Thyroid gland (tissue), 4 donors: ENCODE measurements at regions of chr9 and their contacts with region 1.

Region 1: GRCh38 chr9:133184962-133185361 is 21.2 kb upstream of the GBGT1 start:
- DNase-seq: peak; percentile 63 to 65
- H3K4me3 ChIP-seq: no peak overlapping the region
- H3K27ac ChIP-seq: no peak overlapping the region
- H3K4me1 ChIP-seq: peaks cover 3 to 17% of the 10 kb centered on the region in 2 donors
- H3K27me3 ChIP-seq: no peaks in the 10 kb centered on the region
- CTCF ChIP-seq: peak in 5 of 6 experiments; percentile 42 to 85 (median 69)
- POLR2A ChIP-seq: no peak

Region 2: GRCh38 chr9:133089271-133089671 is 95.7 kb before region 1 on chr9:
- intact Hi-C with region 1: no loop called
- DNase-seq: no peak
- H3K4me3 ChIP-seq: no peak overlapping the region
- H3K27ac ChIP-seq: no peak overlapping the region
- H3K4me1 ChIP-seq: no peaks in the 10 kb centered on the region
- H3K27me3 ChIP-seq: no peaks in the 10 kb centered on the region
- CTCF ChIP-seq: no peak
- POLR2A ChIP-seq: no peak

Region 3: DNA sequence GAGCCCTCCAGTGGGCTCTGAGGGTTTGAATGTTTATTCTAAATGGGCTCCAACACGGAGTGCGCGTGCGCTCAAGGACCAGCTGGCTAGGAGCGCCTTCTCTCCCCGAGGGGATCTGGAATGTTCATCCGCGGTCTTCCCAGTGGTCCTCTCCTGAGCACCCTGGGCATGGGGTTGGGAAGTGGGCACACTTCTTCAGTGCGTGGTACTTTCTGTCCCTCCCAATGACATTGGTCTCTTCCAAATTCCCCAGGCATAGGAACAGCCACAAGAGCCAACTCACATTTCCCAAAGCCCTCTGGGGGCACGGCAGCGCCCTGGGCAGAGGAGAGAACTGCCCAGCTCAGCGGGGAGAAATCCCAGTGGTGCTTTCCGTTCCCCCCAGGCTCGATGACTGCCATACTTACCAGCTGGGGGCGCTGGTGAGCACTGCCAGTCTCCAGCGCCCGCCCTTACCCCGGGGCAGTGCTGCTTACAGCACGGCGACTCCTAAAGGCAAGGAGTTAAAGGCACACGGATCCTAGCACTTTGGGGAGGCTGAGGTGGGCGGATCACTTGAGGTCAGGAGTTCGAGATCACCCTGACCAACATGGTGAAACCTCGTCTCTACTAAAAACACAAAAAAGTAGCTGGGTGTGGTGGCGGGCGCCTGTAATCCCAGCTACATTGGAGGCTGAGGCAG is 54.0 kb after region 1 on chr9:
- intact Hi-C with region 1: no loop called
- DNase-seq: peak; percentile 84 to 88
- H3K4me3 ChIP-seq: no peak overlapping the region
- H3K27ac ChIP-seq: peak overlapping the region; percentile 79 to 89 (median 89)
- H3K4me1 ChIP-seq: peaks cover 24 to 50% of the 10 kb centered on the region in 2 donors
- H3K27me3 ChIP-seq: no peaks in the 10 kb centered on the region
- CTCF ChIP-seq: peak; percentile 41 to 87 (median 81)
- POLR2A ChIP-seq: peak in 1 of 2 donors; percentile 30

Region 4: DNA sequence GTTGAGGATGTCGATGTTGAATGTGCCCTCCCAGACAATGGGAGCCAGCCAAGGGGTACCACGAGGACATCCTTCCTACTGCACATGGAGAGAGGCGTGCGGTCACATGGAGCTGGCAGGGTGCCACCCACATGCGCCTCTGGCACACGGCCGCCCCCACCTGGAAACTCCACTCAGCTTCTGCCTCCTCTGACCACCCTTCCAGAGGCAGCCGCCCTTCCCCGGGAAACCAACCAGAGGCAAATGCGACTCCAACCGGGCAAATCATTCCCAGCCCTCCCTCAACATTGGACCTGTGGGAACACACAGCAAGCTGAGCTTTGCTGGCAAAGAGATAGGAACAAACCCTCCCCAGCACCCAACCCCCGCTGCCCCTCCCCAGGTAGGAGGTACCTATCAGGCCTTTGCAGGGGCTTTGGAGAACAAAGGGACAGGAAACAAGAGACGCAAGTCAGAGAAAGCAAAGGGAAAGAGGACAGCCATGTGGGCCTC is 72.5 kb after region 1 on chr9:
- intact Hi-C with region 1: loop called (anchors 5 kb)
- DNase-seq: peak; percentile 77 to 80
- H3K4me3 ChIP-seq: no peak overlapping the region
- H3K27ac ChIP-seq: peak overlapping the region; percentile 77 to 85 (median 78)
- H3K4me1 ChIP-seq: peaks cover 43 to 58% of the 10 kb centered on the region in 2 donors
- H3K27me3 ChIP-seq: no peaks in the 10 kb centered on the region
- CTCF ChIP-seq: no peak
- POLR2A ChIP-seq: no peak

Region 5: DNA sequence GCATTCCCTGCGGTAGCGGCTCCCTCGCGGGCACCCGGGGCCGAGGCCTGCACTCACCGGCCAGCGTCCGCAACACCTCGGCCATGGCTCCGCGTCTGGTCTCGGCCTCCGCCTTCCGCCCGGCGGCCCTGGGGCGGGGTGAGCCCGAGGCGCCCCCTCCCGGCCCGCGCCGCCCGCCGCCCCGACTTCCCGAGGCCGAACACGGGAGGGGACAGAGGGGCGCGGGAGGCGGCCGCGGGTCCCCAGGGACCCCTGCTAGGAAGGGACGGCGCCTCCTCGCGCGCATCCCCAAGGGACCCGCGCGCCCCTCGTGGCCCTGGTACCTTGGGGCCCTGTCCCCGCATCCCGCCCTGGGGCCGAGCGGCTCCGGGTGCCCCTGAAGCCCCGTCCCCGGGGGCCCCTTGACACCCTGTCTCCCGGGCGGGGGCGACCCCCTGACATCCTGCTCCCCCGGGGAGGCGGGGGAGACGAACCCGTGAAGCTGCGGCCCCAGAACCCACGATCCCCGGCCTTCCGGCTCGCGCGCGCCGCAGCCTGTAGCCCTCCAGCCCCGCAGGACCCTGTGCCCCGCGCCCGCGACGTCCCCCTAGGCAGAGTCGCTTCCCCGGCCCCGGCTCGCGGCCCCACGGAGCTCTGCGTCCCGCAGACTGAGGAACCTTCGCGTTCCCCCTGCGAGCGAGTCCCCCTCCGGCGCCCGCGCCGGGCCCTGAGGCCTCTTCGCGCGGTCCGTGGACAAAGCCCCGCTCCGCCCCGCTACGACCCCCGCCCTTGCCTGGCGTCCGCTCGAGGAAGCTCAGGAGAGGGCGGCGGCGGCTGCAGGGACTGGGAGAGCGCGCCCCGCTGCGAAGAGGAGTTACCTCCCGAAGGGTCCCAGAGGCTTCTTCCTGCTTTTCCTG is 90.4 kb after region 1 on chr9 and contains the start of gene ABO:
- intact Hi-C with region 1: loop called (anchors 5 kb)
- DNase-seq: peak; percentile 61 to 67
- H3K4me3 ChIP-seq: peak within 1 kb of the TSS; percentile 41 to 79 (median 68)
- H3K27ac ChIP-seq: peak within 1 kb of the TSS; percentile 81 to 96 (median 94)
- H3K4me1 ChIP-seq: peaks cover 11 to 16% of the 10 kb centered on the region in 2 donors
- H3K27me3 ChIP-seq: no peaks in the 10 kb centered on the region
- CTCF ChIP-seq: peak in 3 of 6 experiments; percentile 56 to 67 (median 61)
- POLR2A ChIP-seq: peak in 1 of 2 donors; percentile 58
- total RNA-seq, gene ABO: 15.7 to 32.6 (median 24.9) TPM

Region 6: GRCh38 chr9:133335878-133336811 is 151.2 kb after region 1 on chr9 and contains the start of gene SURF6:
- intact Hi-C with region 1: loop called (anchors 5 kb)
- DNase-seq: peak; percentile 88 to 92
- H3K4me3 ChIP-seq: peak within 1 kb of the TSS; percentile 81 to 91 (median 90)
- H3K27ac ChIP-seq: peak within 1 kb of the TSS in 2 of 3 donors; percentile 50 to 71
- H3K4me1 ChIP-seq: peaks cover 16 to 21% of the 10 kb centered on the region in 2 donors
- H3K27me3 ChIP-seq: no peaks in the 10 kb centered on the region
- CTCF ChIP-seq: peak in 1 of 6 experiments; percentile 31
- POLR2A ChIP-seq: peak in 1 of 2 donors; percentile 71
- total RNA-seq, gene SURF6: 18.4 to 34.9 (median 22.0) TPM

Region 7: DNA sequence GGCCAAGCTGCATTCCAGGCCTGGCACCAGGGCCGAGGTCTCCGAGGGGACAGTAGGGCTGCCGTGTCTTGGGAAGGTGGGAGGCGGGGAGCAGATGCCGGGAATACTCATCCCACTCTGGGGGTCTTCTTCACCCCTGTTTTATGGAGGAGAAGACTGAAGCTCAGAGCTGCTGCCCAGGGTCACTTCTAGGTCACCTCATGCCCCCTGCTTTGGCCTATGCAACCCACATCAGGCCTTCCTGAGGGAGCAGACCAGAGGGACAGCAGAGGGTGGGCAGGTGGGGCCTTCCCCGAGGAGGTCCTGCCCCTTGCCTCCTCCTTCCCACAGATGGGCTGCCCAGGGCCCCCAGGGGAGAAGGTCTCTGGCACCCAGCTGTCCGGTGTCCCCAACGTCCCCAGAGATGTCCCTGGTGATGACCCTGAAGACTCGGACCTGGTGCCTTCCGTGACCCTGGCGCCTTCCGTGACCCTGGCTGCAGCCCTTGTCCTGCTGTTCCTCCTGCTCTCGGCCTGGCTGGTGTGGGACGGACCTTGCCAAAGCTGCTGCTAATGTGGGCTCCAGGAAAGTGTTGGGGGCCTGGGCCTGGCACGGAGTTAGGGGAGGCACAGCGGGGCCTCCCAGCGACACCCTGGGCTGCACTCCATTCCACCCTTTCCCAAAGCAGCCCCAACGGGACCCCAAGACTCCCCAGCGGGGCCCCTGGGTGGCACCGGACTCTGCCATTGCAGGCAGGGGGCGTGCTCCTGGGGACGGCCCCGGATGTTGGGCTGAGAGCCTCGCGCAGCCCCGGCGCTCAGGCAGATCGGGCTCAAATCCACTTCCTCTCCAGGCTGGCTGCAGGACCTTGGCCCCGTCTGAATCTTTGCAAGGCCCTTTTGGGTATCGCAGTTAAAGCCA is 300.6 kb after region 1 on chr9:
- intact Hi-C with region 1: loop called (anchors 5 kb)
- DNase-seq: no peak
- H3K4me3 ChIP-seq: no peak overlapping the region
- H3K27ac ChIP-seq: no peak overlapping the region
- H3K4me1 ChIP-seq: peaks cover 0 to 9% of the 10 kb centered on the region in 2 donors
- H3K27me3 ChIP-seq: no peaks in the 10 kb centered on the region
- CTCF ChIP-seq: no peak
- POLR2A ChIP-seq: no peak